Naive thymus-derived CD4-positive, alpha-beta T cell (primary cell): ENCODE measurements at regions of chr12 and their contacts with region 1.

Region 1: DNA sequence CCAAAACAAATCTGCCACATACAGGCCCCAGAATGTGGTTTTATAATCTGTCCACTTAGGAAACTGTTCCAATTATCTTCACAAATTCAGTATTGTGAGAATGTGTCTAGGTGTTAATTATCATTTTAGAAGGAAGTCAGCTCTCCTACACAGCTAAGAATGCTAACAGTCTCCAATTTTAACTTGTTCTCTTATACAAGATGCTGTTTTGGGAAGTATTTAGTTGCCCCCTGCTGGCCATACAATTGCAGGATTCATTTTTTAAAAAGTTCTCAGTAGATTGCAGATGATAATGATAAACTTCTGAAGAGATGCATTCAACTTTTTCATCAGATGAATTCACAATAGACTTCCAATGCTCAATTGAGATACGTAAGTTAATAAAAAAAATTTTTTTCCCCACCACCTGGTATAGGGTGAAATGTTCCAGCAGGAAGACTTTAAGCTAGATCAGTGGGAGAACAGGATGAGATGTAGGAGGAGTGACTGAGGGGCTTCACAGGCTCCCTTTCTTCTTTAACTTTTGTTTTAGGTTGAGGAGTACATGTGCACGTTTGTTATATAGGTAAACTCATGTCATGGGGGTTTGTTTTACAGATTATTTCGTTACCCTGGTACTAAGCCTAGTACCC is 27.3 kb upstream of the OSBPL8 start:
- DNase-seq: peak in 7 of 9 donors; percentile 34 to 70 (median 59)
- ATAC-seq: peak; percentile 77
- H3K4me3 ChIP-seq: no peak overlapping the region
- H3K4me3 Mint-ChIP-seq: no peak overlapping the region
- H3K27ac ChIP-seq: no peak overlapping the region
- H3K27ac Mint-ChIP-seq: peak overlapping the region in 1 of 9 donors; percentile 73
- H3K4me1 ChIP-seq: no peaks in the 10 kb centered on the region
- H3K4me1 Mint-ChIP-seq: peaks cover 0 to 6% (median 0%) of the 10 kb centered on the region in 7 donors
- H3K27me3 ChIP-seq: no peaks in the 10 kb centered on the region
- H3K27me3 Mint-ChIP-seq: no peaks in the 10 kb centered on the region

Region 2: GRCh38 chr12:75334384-75335030 is 1252.4 kb before region 1 on chr12 and contains the start of gene GLIPR1L1:
- CTCF ChIA-PET with region 1: no interaction called
- POLR2A ChIA-PET with region 1: no interaction called
- intact Hi-C with region 1: loop called in 1 of 2 experiments (anchors 10 kb)
- DNase-seq: peak; percentile 58 to 79 (median 74)
- ATAC-seq: peak; percentile 91
- H3K4me3 ChIP-seq: no peak within 1 kb of the TSS
- H3K4me3 Mint-ChIP-seq: peak within 1 kb of the TSS; percentile 18 to 80 (median 74)
- H3K27ac ChIP-seq: no peak within 1 kb of the TSS
- H3K27ac Mint-ChIP-seq: peak within 1 kb of the TSS in 1 of 9 donors; percentile 3
- H3K4me1 ChIP-seq: peaks cover 0 to 5% of the 10 kb centered on the region in 2 donors
- H3K4me1 Mint-ChIP-seq: peaks cover 11 to 29% (median 18%) of the 10 kb centered on the region in 7 donors
- H3K27me3 ChIP-seq: peaks cover 0 to 6% of the 10 kb centered on the region in 2 donors
- H3K27me3 Mint-ChIP-seq: peaks cover 16 to 56% (median 31%) of the 10 kb centered on the region in 5 donors
- total RNA-seq, gene GLIPR1L1: not detected

Region 3: GRCh38 chr12:75814851-75815754 is 771.8 kb before region 1 on chr12:
- CTCF ChIA-PET with region 1: no interaction called
- POLR2A ChIA-PET with region 1: no interaction called
- intact Hi-C with region 1: loop called in 1 of 2 experiments (anchors 2 kb)
- DNase-seq: peak in 1 of 9 donors; percentile 5
- ATAC-seq: peak; percentile 34
- H3K4me3 ChIP-seq: no peak overlapping the region
- H3K4me3 Mint-ChIP-seq: no peak overlapping the region
- H3K27ac ChIP-seq: no peak overlapping the region
- H3K27ac Mint-ChIP-seq: no peak overlapping the region
- H3K4me1 ChIP-seq: peaks cover 0 to 7% of the 10 kb centered on the region in 2 donors
- H3K4me1 Mint-ChIP-seq: peaks cover 0 to 18% (median 0%) of the 10 kb centered on the region in 7 donors
- H3K27me3 ChIP-seq: no peaks in the 10 kb centered on the region
- H3K27me3 Mint-ChIP-seq: peaks cover 0 to 7% (median 5%) of the 10 kb centered on the region in 5 donors

Region 4: GRCh38 chr12:76158518-76159321 is 428.2 kb before region 1 on chr12:
- CTCF ChIA-PET with region 1: no interaction called
- POLR2A ChIA-PET with region 1: no interaction called
- intact Hi-C with region 1: loop called in 1 of 2 experiments (anchors 2 kb)
- DNase-seq: peak; percentile 9 to 88 (median 37)
- ATAC-seq: peak; percentile 95
- H3K4me3 ChIP-seq: no peak overlapping the region
- H3K4me3 Mint-ChIP-seq: peak overlapping the region; percentile 0 to 88 (median 69)
- H3K27ac ChIP-seq: no peak overlapping the region
- H3K27ac Mint-ChIP-seq: peak overlapping the region in 4 of 9 donors; percentile 54 to 80 (median 68)
- H3K4me1 ChIP-seq: no peaks in the 10 kb centered on the region
- H3K4me1 Mint-ChIP-seq: peaks cover 0 to 18% (median 10%) of the 10 kb centered on the region in 7 donors
- H3K27me3 ChIP-seq: no peaks in the 10 kb centered on the region
- H3K27me3 Mint-ChIP-seq: peaks cover 0 to 3% (median 0%) of the 10 kb centered on the region in 5 donors

Region 5: GRCh38 chr12:76402259-76402658 is 184.6 kb before region 1 on chr12:
- CTCF ChIA-PET with region 1: no interaction called
- POLR2A ChIA-PET with region 1: no interaction called
- intact Hi-C with region 1: loop called in 1 of 2 experiments (anchors 5 kb)
- DNase-seq: no peak
- ATAC-seq: no peak
- H3K4me3 ChIP-seq: no peak overlapping the region
- H3K4me3 Mint-ChIP-seq: no peak overlapping the region
- H3K27ac ChIP-seq: no peak overlapping the region
- H3K27ac Mint-ChIP-seq: no peak overlapping the region
- H3K4me1 ChIP-seq: no peaks in the 10 kb centered on the region
- H3K4me1 Mint-ChIP-seq: peaks cover 0 to 4% (median 0%) of the 10 kb centered on the region in 7 donors
- H3K27me3 ChIP-seq: no peaks in the 10 kb centered on the region
- H3K27me3 Mint-ChIP-seq: no peaks in the 10 kb centered on the region

Region 6: DNA sequence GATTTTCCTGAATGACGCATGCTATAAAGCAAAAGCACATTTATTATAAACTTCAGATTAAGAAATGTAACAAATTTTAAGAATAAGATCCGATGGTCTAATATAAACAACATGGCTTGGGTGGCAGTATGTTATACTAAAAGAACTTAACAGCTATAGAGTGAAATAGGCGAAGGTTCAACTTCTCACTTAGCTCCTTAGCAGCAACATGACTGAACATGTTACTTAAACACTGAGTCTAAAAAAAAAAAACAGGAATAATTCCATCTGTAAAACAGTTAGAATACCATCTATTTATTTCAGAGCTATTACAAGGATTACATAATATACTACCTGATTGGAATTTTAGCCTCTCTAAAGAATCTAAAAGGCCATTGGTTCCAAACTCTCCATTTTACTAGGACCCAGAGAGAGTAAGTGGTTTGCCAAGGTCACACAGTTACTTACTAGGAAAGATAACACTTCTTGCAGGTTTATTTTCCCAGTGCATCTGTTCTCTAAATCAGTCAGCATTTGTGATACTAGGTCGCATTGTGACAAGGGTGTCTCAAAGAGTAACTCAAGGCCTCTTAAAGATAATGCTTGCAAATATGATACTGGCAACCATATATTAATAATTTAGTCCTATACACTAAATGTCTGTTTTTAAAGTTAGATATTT is 42.1 kb before region 1 on chr12:
- CTCF ChIA-PET with region 1: no interaction called
- POLR2A ChIA-PET with region 1: no interaction called
- intact Hi-C with region 1: loop called (anchors 5 kb)
- DNase-seq: no peak
- ATAC-seq: no peak
- H3K4me3 ChIP-seq: no peak overlapping the region
- H3K4me3 Mint-ChIP-seq: peak overlapping the region in 2 of 10 donors; percentile 6 to 17
- H3K27ac ChIP-seq: no peak overlapping the region
- H3K27ac Mint-ChIP-seq: peak overlapping the region in 1 of 9 donors; percentile 26
- H3K4me1 ChIP-seq: peaks cover 25 to 45% of the 10 kb centered on the region in 2 donors
- H3K4me1 Mint-ChIP-seq: peaks cover 51 to 94% (median 83%) of the 10 kb centered on the region in 7 donors
- H3K27me3 ChIP-seq: no peaks in the 10 kb centered on the region
- H3K27me3 Mint-ChIP-seq: no peaks in the 10 kb centered on the region

Region 7: GRCh38 chr12:76738934-76739586 is 152.2 kb after region 1 on chr12:
- CTCF ChIA-PET with region 1: no interaction called
- POLR2A ChIA-PET with region 1: no interaction called
- intact Hi-C with region 1: no loop called
- DNase-seq: no peak
- ATAC-seq: no peak
- H3K4me3 ChIP-seq: no peak overlapping the region
- H3K4me3 Mint-ChIP-seq: no peak overlapping the region
- H3K27ac ChIP-seq: no peak overlapping the region
- H3K27ac Mint-ChIP-seq: no peak overlapping the region
- H3K4me1 ChIP-seq: no peaks in the 10 kb centered on the region
- H3K4me1 Mint-ChIP-seq: peaks cover 0 to 2% (median 0%) of the 10 kb centered on the region in 7 donors
- H3K27me3 ChIP-seq: no peaks in the 10 kb centered on the region
- H3K27me3 Mint-ChIP-seq: peaks cover 2 to 13% (median 9%) of the 10 kb centered on the region in 5 donors